ENCODE measurements at regions of chr7 and their contacts with region 1.

Region 1: DNA sequence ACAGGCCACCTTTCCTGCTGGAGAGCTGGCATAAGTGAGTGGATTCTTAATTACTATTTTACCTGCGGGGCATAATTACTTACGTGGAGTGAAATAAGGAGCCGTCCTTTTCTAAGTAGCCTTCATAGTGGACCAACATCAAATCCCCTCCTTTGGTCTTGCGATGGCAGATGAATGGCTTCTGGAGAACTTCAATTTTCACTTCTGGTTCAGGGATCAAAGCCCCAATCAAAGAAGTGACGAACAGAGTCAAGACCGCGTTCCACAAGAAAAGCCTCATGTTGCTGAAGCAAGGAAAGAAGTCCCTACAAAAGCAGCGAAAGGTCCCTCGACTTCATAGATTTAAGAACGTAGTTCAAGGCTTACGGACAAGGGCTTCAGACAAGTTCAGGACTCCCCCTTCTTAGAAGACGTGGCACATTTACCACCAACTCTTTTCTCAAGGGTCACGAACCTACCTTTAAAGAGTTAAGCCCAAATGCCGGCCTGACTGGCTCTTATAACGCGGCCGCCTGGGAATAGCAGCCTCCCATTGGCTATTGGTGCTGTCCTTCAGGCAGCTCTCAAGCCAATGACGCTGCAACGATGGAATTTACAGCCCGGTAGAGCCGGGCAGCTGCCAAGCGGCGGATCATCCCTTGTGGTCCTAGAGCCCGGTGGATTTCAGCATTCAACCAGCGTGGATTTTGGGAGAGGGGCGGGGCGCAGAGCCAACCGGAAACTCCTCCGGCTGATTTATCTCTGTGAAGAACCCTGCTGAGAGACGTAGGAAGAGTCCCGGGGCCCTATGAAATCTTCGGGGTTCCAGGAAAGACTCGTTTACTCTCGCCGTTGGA is at the start of gene FKBP14:
- DNase-seq: peak; percentile 97 to 98
- H3K4me3 ChIP-seq: peak within 1 kb of the TSS; percentile 93 to 94
- H3K27ac ChIP-seq: peak within 1 kb of the TSS; percentile 91 to 92
- H3K4me1 ChIP-seq: peaks cover 0 to 54% (median 34%) of the 10 kb centered on the region in 4 donors
- H3K27me3 ChIP-seq: no peaks in the 10 kb centered on the region
- CTCF ChIP-seq: no peak

Region 2: GRCh38 chr7:29780346-29780745 is 246.1 kb before region 1 on chr7:
- intact Hi-C with region 1: no loop called
- DNase-seq: no peak
- H3K4me3 ChIP-seq: no peak overlapping the region
- H3K27ac ChIP-seq: no peak overlapping the region
- H3K4me1 ChIP-seq: no peaks in the 10 kb centered on the region
- H3K27me3 ChIP-seq: no peaks in the 10 kb centered on the region
- CTCF ChIP-seq: no peak

Region 3: GRCh38 chr7:29988424-29989256 is 37.8 kb before region 1 on chr7:
- intact Hi-C with region 1: loop called (anchors 5 kb)
- DNase-seq: peak; percentile 35 to 70
- H3K4me3 ChIP-seq: peak overlapping the region; percentile 78 to 82
- H3K27ac ChIP-seq: peak overlapping the region; percentile 92
- H3K4me1 ChIP-seq: peaks cover 0 to 36% (median 15%) of the 10 kb centered on the region in 4 donors
- H3K27me3 ChIP-seq: no peaks in the 10 kb centered on the region
- CTCF ChIP-seq: no peak

Region 4: GRCh38 chr7:30134611-30135545 is 108.4 kb after region 1 on chr7 and contains the start of gene MTURN:
- intact Hi-C with region 1: loop called (anchors 5 kb)
- DNase-seq: peak; percentile 80 to 92
- H3K4me3 ChIP-seq: peak within 1 kb of the TSS; percentile 90 to 91
- H3K27ac ChIP-seq: peak within 1 kb of the TSS; percentile 92 to 95
- H3K4me1 ChIP-seq: peaks cover 0 to 44% (median 26%) of the 10 kb centered on the region in 4 donors
- H3K27me3 ChIP-seq: no peaks in the 10 kb centered on the region
- CTCF ChIP-seq: peak in 1 of 2 experiments; percentile 12

Measured in tibial artery (tissue), 4 donors.